ENCODE measurements at regions of chr14 and their contacts with region 1.

Region 1: DNA sequence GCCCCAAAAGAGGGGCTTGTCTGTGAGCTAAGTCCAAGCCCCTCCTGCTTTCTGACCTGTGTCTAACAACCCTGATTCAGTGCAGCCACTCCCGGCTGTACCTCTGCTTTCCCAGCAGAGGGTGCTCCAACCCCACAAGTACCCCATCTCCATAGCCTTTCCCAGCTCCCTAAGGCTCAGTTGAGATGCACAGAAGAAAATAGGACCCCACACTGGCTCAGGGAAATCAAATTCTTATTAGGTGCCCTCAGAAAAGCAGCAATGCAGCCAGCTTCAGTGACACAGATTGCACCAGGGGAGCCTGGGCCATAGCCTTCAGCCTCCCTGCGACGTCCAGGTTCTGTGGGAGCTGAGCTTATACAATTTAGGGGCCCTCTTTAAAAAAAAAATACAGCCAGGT is 49.9 kb downstream of the LRRC74A start:
- DNase-seq: peak; percentile 78
- CTCF ChIP-seq: peak; percentile 94

Region 2: DNA sequence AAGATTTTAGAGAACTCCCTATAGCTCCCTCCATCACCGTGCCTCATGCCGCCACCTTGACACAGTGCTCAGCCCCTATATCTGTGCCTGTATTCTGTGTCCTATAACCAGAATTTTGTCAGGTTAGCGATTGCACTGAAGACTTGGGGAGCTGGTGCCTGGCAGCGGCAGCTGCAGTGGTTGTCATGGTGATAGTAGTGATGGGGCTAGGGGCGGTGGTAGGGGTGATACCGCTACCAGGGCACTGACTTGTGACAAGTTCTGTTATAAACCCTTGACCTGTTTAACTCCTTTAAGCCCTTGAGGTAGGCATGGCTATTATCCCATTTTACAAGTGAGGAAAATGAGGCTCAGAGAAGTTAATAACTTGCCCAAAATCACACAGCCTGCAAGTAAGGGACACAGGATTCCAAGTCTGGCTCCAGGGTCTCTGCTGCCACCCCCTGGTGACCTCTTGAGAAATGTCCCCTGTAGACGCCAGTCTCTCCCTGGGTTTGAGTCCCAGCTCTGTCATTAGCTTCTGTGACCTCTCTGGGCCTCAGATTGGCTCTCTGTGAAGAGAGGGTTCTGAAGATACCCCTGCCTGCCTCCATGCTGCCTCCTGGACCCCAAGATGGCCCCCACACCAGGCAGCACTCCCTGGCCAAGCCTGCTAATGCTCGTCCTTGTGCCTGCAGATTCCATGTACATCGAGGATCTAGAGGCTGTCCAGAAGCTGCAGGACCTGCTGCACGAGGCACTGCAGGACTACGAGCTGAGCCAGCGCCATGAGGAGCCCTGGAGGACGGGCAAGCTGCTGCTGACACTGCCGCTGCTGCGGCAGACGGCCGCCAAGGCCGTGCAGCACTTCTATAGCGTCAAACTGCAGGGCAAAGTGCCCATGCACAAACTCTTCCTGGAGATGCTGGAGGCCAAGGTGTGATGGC is 378.3 kb before region 1 on chr14:
- CTCF ChIA-PET with region 1: no interaction called
- POLR2A ChIA-PET with region 1: no interaction called
- DNase-seq: no peak
- CTCF ChIP-seq: no peak

Region 3: GRCh38 chr14:76720382-76720813 is 155.7 kb before region 1 on chr14:
- CTCF ChIA-PET with region 1: no interaction called
- POLR2A ChIA-PET with region 1: no interaction called
- DNase-seq: peak; percentile 59
- CTCF ChIP-seq: no peak

Region 4: GRCh38 chr14:76837524-76837923 is 38.6 kb before region 1 on chr14:
- CTCF ChIA-PET with region 1: no interaction called
- POLR2A ChIA-PET with region 1: no interaction called
- DNase-seq: no peak
- CTCF ChIP-seq: no peak

Region 5: DNA sequence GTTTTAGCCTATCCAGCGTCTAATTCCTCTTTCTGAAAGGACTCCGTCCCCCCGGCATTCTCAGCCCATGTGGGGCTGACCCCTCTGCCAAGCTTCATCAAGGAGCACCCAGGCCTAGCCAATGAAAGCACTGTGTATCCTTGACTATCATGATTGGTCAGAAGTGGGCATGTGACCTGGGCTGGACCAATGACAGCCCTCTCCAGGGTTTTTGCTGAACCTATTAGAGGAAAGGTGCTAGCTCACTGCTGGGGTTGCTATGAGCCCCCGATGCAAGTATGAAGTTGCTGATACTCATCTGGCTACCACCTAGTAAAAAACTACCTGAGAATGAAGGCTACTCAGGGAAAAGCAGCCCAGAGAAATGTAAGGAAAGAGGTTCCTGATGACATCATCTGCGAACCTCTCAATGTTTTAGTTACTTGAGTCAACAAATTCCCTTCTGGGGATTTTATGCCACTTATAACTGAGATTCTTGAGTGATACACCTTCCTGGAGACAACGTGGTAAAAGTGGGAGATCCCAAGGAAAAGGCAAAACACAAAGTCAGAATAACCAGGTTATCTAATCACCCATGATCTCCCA is 18.3 kb after region 1 on chr14:
- CTCF ChIA-PET with region 1: interaction called, 79 read pairs
- POLR2A ChIA-PET with region 1: no interaction called
- DNase-seq: no peak
- CTCF ChIP-seq: no peak

Region 6: DNA sequence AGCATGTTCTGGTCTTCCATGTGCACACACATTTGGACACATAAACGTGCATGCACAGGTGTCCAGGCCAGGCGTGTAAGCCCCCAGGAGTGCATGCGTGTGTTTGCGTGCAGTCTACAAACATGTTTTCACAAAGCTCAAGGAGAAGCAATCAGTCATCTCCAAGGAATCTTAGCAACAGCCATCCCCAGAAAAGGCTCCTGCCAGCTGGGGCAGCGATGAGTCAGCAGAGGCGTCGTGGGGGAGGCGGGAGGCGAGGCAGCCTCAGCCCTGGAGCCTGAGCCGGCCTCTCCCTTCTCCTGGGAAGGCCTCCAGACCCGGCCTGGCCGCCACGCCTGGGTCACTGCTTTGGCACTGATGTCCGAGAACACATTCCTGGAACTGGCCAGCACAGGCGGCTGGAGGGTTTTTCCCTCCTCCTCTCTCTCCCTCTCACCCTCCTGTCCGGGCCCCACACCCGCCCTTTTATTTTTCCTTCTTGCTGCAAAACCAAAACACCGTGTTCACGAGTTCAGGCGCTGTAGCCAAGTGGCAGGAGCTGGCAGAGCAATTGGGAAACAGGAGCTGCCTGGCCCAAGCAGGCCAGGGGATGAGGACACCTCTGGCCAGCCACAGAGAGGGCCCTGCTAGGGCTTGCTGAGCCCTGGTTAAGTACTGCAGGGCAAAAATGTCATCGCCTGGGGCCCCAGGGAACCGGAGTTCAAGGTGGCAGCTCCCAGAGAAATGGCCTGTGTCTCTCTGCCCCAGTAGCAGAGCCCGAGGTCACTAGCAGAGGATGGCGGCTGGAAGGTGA is 42.9 kb after region 1 on chr14:
- CTCF ChIA-PET with region 1: interaction called, 61 read pairs
- POLR2A ChIA-PET with region 1: no interaction called
- DNase-seq: no peak
- CTCF ChIP-seq: no peak

Region 7: DNA sequence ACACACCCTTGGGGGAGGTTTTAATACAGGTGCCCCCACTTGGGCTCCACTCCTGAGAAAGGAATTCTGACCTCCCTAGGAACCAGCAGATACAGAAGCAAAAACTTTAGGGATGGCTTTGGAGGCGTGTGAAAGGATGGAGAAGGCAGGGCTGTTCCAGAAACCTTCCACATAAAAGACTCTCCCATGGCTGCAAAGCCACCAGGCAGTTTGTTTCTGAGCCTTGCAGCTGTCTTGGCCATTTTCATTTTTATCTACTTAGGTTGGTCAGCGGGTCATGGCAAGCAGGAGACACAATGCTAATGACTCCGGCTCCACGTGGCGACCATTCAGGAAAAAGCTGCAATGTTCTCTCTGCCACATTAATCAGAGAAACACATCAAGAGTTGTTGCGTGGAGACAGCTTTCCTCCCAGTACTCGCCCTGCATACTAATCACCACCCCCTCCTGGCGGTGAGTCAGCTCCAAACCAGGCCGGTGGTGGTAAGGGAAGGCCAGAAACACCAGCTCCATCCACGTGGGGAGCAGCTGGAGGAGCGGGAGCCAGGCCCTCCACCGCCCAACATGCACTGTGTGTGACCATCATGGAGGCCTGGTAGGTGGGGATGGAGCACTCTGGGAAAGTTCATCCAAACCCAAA is 183.3 kb after region 1 on chr14:
- CTCF ChIA-PET with region 1: interaction called, 586 read pairs
- POLR2A ChIA-PET with region 1: no interaction called
- DNase-seq: no peak
- CTCF ChIP-seq: peak; percentile 13

Region 8: DNA sequence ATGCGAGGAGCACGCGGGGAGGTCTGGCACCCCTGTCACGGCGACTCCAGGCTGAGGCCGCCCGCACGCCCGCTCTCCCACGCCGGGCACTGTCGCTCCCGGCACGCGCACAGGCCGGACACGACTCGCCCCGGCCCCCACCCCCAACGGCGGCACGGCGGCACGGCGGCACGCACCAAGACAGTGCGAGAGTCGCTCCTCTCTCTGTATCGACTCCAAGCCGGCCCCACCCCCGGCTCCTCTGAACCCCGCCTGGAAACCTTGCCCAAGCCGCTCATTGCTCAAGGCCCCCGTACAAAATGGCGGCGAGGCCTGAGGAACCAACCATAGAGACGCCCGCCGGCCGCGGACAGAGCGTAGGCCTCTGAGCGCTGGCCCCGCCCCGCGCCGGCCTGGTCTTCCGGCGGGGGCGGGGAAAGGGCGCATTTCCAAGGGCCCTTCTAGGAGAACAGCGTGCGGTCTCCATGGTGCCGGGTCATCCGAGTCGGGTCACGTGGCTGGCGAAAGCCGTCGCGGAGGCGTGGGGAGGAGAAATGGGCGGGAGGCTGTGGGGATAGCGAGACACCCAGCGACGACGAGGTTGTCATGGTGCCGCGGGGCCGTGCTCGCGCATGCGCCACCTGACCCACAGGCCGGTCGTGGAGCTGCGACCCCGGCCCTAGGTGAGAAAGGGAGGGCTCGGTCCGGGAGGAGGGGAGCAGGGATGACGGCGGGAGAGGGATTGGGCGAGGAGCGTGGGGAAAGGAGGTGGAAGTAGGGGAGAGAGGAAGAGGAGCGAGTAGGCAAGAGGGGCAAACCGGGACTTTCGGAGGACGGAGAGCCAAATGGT is 221.8 kb after region 1 on chr14 and contains the start of gene CIPC:
- CTCF ChIA-PET with region 1: interaction called, 93 read pairs
- POLR2A ChIA-PET with region 1: no interaction called
- DNase-seq: peak; percentile 98
- CTCF ChIP-seq: no peak

Region 9: DNA sequence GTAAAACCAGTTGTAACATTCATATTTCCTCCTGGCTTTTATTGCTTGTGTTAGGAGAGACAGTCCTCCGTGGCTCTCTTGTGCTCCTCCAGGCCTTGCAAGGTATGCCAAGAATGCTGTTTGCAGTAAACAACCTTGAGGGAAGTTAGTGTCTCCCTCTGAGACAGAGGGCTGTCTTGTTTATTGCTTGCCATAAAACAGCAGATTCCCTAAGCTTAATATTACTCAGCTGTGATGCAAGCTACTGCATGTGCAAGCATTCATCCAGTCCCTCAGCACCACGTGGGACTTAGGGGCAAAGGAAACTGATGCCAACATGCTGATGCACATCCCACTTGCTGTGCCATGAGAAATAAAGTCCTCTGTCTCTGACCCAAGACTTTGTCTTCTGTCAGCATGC is 438.0 kb after region 1 on chr14:
- CTCF ChIA-PET with region 1: interaction called, 43 read pairs
- POLR2A ChIA-PET with region 1: no interaction called
- DNase-seq: no peak
- CTCF ChIP-seq: no peak

Measured in GM10248 (cell line).